Activated T-helper 2 cell treated with anti-CD3 and anti-CD28 coated beads, Interferon-gamma antibody, Interleukin-2, Interleukin-4, amounts not matched to agents 10 μg/mL and 5 μg/mL and 100 μg/mL, durations not matched to agents 14 hours and 24 hours and 36 hours (primary cell): ENCODE measurements at regions of chr19 and their contacts with region 1.

Region 1: GRCh38 chr19:2618611-2619010 is 83.9 kb downstream of the GNG7 start:
- DNase-seq: peak; percentile 32
- H3K4me3 Mint-ChIP-seq: peak overlapping the region; percentile 24
- H3K27ac Mint-ChIP-seq: peak overlapping the region; percentile 88
- H3K4me1 Mint-ChIP-seq: peaks cover 54% of the 10 kb centered on the region
- H3K27me3 Mint-ChIP-seq: no peaks in the 10 kb centered on the region

Region 2: DNA sequence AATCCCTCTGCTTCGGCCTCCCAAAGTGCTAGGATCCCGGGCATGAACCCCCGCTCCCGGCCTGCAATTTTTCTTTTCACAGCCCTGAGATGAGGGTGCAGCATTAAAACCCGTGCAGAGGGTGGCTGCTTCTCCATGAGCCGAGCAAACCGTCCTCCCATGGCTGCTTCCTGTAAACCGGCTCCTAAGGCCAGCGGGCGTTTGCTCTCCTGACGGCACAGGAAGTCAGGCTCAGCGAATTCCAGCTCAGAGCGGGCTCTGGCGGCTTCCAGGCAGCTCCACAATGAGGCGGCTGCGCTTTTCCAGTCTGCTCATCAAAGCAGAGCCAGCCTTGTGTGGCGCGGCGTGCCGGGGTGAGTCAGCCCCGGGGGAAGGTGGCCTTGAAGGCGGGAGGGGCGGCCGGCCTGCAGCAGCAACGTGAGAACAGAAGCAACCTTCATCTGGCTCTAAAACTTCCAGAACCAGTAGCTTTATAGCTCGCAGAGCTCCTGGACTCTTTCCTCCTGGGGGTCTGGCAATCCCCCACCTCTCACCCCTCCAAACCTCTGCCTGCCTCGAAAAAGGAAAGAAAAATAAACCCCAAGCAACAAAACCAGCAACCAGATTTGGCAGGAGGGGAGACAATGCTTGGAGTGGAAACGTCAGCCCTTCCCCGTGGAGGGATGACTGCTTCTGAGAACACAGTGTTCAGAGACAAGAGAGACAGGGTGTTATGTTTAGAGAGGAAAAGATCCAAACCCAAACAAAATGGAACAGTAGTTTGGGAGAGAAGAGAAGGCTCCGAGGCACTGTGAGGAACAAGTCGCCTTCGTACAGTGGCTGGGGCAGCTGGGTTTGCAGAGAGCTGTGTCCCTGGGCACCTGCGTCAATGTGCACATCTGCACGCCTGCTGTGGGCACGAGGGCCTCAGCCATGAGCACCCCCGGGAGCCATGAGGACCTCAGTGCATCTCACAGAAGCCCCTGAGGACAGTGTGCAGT is 74.9 kb before region 1 on chr19:
- intact Hi-C with region 1: no loop called
- DNase-seq: peak; percentile 32
- H3K4me3 Mint-ChIP-seq: peak overlapping the region; percentile 20
- H3K27ac Mint-ChIP-seq: no peak overlapping the region
- H3K4me1 Mint-ChIP-seq: peaks cover 14% of the 10 kb centered on the region
- H3K27me3 Mint-ChIP-seq: no peaks in the 10 kb centered on the region

Region 3: DNA sequence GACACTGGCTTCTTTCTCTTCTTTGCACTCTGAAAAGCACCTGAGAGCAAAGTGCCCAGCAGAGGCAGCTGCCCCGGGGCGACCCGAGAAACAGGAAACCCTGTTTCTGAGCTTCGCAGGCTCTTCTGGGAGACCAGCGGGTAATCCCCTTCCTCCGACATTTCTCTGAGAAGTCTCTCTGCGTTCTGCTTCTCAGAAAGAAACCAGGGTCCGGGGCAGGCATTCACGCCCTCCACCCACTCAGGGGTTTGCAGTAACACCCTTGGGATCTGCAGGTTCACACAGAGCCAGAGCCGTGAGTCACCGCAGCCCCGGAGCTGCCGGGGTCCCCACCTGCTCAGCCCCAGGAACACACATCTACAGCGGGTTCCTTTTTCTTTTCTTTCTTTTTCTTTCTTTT is 56.7 kb before region 1 on chr19:
- intact Hi-C with region 1: loop called (anchors 1 kb)
- DNase-seq: peak; percentile 69
- H3K4me3 Mint-ChIP-seq: peak overlapping the region; percentile 72
- H3K27ac Mint-ChIP-seq: peak overlapping the region; percentile 86
- H3K4me1 Mint-ChIP-seq: peaks cover 28% of the 10 kb centered on the region
- H3K27me3 Mint-ChIP-seq: peaks cover 5% of the 10 kb centered on the region

Region 4: DNA sequence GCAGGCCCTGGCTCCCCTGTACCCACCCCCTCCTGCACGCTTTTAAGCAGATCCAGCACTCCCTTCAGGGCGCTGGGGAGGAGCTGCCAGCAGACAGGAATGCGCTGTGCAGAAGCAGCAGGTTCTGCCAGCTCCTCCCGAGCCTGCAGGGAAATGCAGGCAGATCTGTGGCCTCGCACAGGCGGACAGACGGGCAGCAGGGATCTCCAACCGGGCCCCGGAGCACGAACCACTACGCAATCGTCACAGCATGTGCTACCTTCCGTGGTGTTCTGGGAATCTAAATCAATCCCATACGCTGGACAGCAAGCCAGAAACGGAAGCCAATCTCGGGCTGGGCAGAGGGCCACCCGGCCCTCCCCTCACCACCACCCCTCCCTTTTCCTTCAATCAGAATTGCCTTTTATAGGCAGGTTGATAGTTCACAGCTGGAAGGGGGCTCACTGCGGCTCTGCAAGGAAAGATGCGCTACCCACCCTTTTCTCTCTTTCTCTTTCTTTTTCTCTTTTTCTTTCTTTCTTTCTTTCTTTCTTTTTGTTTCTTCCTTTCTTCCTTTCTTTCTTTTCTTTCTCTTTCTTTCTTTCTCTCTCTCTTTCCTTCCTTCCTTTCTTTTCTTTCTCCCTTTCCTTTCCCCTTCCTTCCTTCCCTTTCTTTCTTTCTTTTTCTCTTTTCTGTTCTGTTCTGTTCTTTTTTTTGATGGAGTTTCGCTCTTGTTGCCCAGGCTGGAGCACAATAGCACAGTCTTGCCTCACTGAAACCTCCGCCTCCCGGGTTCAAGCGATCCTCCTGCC is 16.0 kb before region 1 on chr19:
- intact Hi-C with region 1: loop called (anchors 2 kb)
- DNase-seq: no peak
- H3K4me3 Mint-ChIP-seq: no peak overlapping the region
- H3K27ac Mint-ChIP-seq: no peak overlapping the region
- H3K4me1 Mint-ChIP-seq: peaks cover 15% of the 10 kb centered on the region
- H3K27me3 Mint-ChIP-seq: peaks cover 12% of the 10 kb centered on the region